ENCODE measurements at regions of chr7 and their contacts with region 1.

Region 1: DNA sequence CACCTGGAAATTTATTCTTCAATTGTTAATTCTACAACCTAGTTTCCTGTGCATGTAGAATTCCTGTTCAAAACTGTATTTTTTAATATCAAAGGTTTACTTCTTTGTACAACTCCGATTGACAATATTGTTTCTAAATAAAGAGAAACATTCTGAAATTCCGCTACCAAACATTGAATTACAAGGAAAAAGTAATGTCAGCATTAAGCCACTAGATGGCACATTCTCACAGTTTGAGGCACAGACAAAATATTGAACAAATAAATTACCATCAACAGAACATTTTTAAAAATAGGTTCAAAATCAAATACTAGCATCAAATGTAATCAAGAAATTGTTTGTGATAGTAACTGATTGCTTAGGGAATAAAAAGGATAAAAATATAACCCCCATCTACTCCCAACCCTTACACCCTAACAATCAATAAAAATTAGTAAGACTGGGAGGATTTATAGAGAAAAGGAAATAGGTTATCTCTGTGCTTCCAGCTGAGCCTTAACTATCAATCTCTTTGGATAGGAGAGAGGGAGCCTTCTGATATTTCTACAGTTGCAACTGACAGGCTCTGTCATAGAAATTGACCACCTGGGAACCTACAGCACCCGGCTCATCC is 86.6 kb upstream of the C7orf33 start:
- DNase-seq: no peak
- ATAC-seq: no peak
- H3K4me3 ChIP-seq: no peak overlapping the region
- H3K27ac ChIP-seq: no peak overlapping the region
- H3K4me1 ChIP-seq: no peaks in the 10 kb centered on the region
- H3K27me3 ChIP-seq: peaks cover 0 to 23% of the 10 kb centered on the region in 2 experiments; a peak in 2 of 5 replicates
- CTCF ChIP-seq: peak; percentile 65
- EP300 ChIP-seq: no peak
- POLR2A ChIP-seq: no peak
- RAD21 ChIP-seq: 0 out of 2 replicates have a peak, but pooled peaks have one; percentile 27

Region 2: DNA sequence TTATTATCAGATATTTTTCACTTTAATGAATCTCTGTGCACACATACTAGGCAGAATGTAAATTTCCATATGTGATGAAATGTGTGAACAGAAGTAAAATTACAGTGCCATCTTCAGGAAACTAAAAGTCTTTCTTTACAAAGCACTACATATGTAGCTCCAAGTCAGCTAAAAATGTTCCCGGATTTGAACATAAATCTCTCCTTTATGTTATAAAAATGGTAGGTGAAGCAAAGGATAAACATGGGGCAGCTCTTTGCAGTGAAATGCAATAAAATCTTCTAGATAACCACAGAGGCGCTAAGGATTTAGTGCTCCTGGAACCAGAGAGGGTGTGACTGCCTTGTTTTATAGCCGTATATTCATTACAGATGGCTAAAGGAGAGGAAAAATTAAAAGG is 18.4 kb before region 1 on chr7:
- CTCF ChIA-PET with region 1: no interaction called
- POLR2A ChIA-PET with region 1: no interaction called
- in situ Hi-C with region 1: no loop called
- intact Hi-C with region 1: no loop called
- DNase-seq: no peak
- ATAC-seq: peak; percentile 34; the same call in 1 of the 3 replicates
- H3K4me3 ChIP-seq: no peak overlapping the region
- H3K27ac ChIP-seq: no peak overlapping the region
- H3K4me1 ChIP-seq: peaks cover 14% of the 10 kb centered on the region
- H3K27me3 ChIP-seq: peaks cover 2 to 6% of the 10 kb centered on the region in 2 experiments; a peak in 2 of 5 replicates
- CTCF ChIP-seq: peak; percentile 50
- EP300 ChIP-seq: no peak
- POLR2A ChIP-seq: no peak
- RAD21 ChIP-seq: no peak

Region 3: GRCh38 chr7:148527707-148528168 is 23.8 kb after region 1 on chr7:
- CTCF ChIA-PET with region 1: interaction called, 21 read pairs
- POLR2A ChIA-PET with region 1: no interaction called
- in situ Hi-C with region 1: no loop called
- intact Hi-C with region 1: loop called (anchors 1 kb)
- DNase-seq: peak; percentile 88
- ATAC-seq: peak; percentile 97
- H3K4me3 ChIP-seq: peak overlapping the region in 1 of 3 experiments; percentile 46; a peak in 1 of 6 replicates
- H3K27ac ChIP-seq: no peak overlapping the region
- H3K4me1 ChIP-seq: peaks cover 31% of the 10 kb centered on the region
- H3K27me3 ChIP-seq: 0 out of 5 replicates have a peak, but pooled peaks cover 0 to 5% of the 10 kb centered on the region in 2 experiments
- CTCF ChIP-seq: peak; percentile 86
- EP300 ChIP-seq: no peak
- POLR2A ChIP-seq: no peak
- RAD21 ChIP-seq: peak; percentile 72

Region 4: DNA sequence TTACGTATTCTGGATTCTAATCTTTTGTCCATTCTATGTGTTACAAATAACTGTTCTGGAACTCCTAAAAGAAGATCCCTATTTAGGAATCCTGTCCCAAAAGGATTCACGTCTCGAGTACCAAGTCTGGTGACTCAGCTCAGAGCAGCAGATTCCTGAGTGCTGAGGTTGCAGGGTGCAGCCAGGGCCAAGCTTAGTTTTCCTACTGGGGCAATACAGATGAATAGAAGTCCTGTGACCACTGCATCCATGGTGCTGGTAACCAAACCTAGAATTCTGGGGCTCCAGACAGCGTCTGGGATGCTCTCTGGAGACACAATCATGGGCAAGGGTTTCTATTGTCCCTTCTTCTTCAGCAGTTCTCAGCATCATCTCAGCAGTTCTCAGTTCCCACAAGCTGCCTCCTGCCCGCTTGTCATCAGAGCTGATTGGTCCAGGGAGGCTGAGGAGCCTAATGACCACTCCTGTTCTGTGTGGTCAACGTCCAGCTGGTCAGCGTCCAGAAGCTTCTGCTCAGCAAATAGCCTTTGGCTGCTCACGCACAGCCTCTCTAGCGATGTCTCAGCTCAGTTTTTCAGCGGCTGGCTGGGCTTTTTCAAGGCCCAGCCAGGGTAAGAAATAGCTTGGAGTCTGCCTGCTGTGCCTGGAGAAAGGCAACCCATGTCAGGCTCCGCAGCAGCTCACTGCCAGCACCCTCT is 36.2 kb after region 1 on chr7:
- CTCF ChIA-PET with region 1: no interaction called
- POLR2A ChIA-PET with region 1: no interaction called
- in situ Hi-C with region 1: no loop called
- intact Hi-C with region 1: no loop called
- DNase-seq: no peak
- ATAC-seq: no peak
- H3K4me3 ChIP-seq: no peak overlapping the region
- H3K27ac ChIP-seq: no peak overlapping the region
- H3K4me1 ChIP-seq: no peaks in the 10 kb centered on the region
- H3K27me3 ChIP-seq: peaks cover 0 to 16% of the 10 kb centered on the region in 2 experiments; a peak in 2 of 5 replicates
- CTCF ChIP-seq: no peak
- EP300 ChIP-seq: no peak
- POLR2A ChIP-seq: no peak
- RAD21 ChIP-seq: no peak